ENCODE measurements at regions of chr12 and their contacts with region 1.

Region 1: DNA sequence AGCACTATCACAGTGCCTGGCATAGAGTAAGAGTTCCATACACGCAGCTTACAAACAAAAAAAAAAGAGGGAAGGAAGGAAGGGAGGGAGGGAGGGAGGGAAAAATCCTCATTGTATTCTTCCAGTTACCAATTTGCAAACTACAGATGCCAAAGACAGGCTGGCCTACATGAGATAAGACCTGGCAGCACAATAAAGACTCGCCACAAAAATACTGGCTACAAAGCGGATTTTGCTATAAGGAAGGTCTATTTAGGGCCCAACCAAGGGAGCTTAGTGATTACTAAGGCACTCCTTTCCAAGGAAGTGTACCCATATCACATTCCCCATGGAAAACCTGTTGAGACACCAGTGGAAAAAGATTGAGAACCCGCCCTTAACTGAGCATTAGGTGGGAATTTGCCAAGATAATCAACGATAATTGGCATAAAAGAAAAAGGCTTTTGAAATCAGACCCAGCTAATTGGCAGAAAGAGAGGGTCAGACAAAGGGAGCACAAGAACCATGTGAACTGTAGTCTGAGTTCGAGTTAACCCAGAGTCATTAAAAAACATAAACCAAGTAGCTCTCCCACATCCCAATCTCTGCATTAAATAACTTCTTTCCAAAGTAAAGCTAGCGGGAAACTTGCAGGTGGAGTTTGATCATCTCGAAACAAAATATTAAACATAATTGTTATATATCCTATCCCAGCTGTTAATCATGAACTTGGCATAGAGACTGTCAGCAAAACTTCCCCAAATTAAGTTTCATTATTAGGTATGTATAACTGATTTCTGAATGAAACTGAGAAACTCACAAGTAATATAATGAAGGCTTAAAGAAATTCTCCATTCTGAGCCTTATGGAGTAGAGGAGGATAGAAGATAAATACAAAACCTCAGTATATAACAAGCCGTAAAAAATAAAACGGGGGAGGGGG is 50.1 kb downstream of the PHLDA1 start:
- DNase-seq: no peak
- H3K4me3 ChIP-seq: no peak overlapping the region
- CTCF ChIP-seq: no peak
- POLR2A ChIP-seq: no peak

Region 2: DNA sequence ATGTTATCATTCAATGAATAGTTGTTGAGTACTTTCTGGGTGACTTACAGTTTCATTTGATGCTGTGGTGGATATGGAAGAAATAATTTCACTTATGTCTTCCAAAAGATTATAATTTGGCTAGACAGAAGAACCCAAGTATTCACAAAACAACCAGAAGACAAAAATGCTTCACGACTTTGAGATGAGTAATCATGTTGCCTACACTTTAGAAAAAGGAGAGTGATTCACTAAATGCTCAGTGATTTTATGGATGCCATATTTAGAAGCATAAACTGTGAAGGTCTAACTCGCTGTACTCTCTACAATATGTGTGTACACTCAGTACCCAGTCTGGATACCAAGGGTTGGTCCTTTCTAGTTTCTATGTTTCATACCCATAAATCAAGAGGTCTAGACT is 1185.2 kb after region 1 on chr12:
- intact Hi-C with region 1: loop called (anchors 10 kb)
- DNase-seq: no peak
- H3K4me3 ChIP-seq: no peak overlapping the region
- CTCF ChIP-seq: no peak
- POLR2A ChIP-seq: no peak

Measured in lower leg skin (tissue), 4 donors.